Activated CD4-positive, alpha-beta memory T cell treated with anti-CD3 and anti-CD28 coated beads for 36 hours (primary cell): ENCODE measurements at regions of chr18 and their contacts with region 1.

Region 1: GRCh38 chr18:76859474-76860339 is 37.4 kb downstream of the ZNF236 start:
- DNase-seq: peak; percentile 64
- H3K4me3 Mint-ChIP-seq: no peak overlapping the region
- H3K27ac Mint-ChIP-seq: peak overlapping the region; percentile 68
- H3K4me1 Mint-ChIP-seq: peaks cover 20% of the 10 kb centered on the region
- H3K27me3 Mint-ChIP-seq: no peaks in the 10 kb centered on the region

Region 2: GRCh38 chr18:77054606-77055428 is 195.1 kb after region 1 on chr18:
- CTCF ChIA-PET with region 1: no interaction called
- POLR2A ChIA-PET with region 1: no interaction called
- intact Hi-C with region 1: loop called (anchors 1 kb)
- DNase-seq: peak; percentile 90
- H3K4me3 Mint-ChIP-seq: peak overlapping the region; percentile 81
- H3K27ac Mint-ChIP-seq: peak overlapping the region; percentile 96
- H3K4me1 Mint-ChIP-seq: peaks cover 72% of the 10 kb centered on the region
- H3K27me3 Mint-ChIP-seq: no peaks in the 10 kb centered on the region